Spleen (tissue), 13 donors: ENCODE measurements at regions of chr3 and their contacts with region 1.

Region 1: GRCh38 chr3:128426128-128426921 is 40.4 kb downstream of the DNAJB8 start:
- DNase-seq: peak; percentile 92
- H3K4me3 ChIP-seq: peak overlapping the region in 6 of 8 donors; percentile 19 to 62 (median 28)
- H3K27ac ChIP-seq: no peak overlapping the region
- H3K4me1 ChIP-seq: peaks cover 0 to 13% (median 10%) of the 10 kb centered on the region in 6 donors
- H3K27me3 ChIP-seq: peaks cover 0 to 59% (median 0%) of the 10 kb centered on the region in 7 donors
- CTCF ChIP-seq: peak; percentile 49 to 97 (median 84)
- POLR2A ChIP-seq: no peak

Region 2: DNA sequence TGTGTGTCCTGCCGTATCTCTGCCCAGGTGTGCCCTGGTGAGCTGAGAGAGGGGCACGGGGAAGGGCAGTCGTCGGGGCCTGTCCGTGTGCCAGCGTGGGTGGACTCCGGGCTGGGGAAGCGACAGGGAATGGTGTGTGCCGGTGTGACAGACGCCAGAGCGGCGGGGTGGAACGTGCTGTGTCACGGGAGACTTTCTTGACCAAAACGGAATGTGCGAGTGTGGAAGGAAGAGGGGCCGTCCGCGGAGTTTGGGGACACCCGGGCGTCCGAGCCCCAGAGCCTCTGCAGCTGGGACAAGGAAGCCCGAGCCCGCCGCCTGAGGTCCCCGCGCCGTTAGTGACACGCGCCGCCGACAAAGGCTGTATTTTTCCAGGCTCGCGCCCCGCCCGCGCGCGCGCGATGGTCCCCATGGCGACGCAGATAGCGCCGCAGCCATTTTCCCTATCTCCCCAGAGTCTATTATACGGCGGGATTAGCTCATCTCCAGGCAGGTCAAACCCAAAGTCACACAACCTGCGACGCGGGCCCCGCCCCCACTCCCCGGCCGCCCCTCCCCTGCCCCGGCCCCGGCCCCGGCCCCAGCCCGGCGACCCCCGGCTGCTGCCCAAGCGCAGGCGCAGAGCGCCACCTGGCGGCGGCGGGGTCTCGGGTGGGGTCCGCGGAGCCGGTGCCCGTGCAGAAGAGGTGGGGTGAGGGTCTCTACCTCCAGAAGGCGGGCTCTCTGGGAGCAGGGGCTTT is 71.2 kb after region 1 on chr3:
- intact Hi-C with region 1: loop called (anchors 5 kb)
- DNase-seq: peak; percentile 86
- H3K4me3 ChIP-seq: peak overlapping the region; percentile 35 to 69 (median 58)
- H3K27ac ChIP-seq: peak overlapping the region in 4 of 8 donors; percentile 15 to 54 (median 50)
- H3K4me1 ChIP-seq: peaks cover 6 to 52% (median 33%) of the 10 kb centered on the region in 6 donors
- H3K27me3 ChIP-seq: peaks cover 0 to 77% (median 37%) of the 10 kb centered on the region in 7 donors
- CTCF ChIP-seq: peak in 9 of 11 experiments; percentile 44 to 88 (median 71)
- POLR2A ChIP-seq: no peak

Region 3: GRCh38 chr3:128584412-128585020 is 158.2 kb after region 1 on chr3:
- intact Hi-C with region 1: loop called (anchors 10 kb)
- DNase-seq: peak; percentile 89
- H3K4me3 ChIP-seq: no peak overlapping the region
- H3K27ac ChIP-seq: no peak overlapping the region
- H3K4me1 ChIP-seq: peaks cover 4 to 18% (median 7%) of the 10 kb centered on the region in 6 donors
- H3K27me3 ChIP-seq: peaks cover 0 to 4% (median 0%) of the 10 kb centered on the region in 7 donors
- CTCF ChIP-seq: peak; percentile 44 to 93 (median 76)
- POLR2A ChIP-seq: no peak

Region 4: GRCh38 chr3:128607710-128608048 is 181.4 kb after region 1 on chr3:
- intact Hi-C with region 1: loop called (anchors 5 kb)
- DNase-seq: no peak
- H3K4me3 ChIP-seq: peak overlapping the region; percentile 18 to 74 (median 49)
- H3K27ac ChIP-seq: peak overlapping the region; percentile 53 to 84 (median 79)
- H3K4me1 ChIP-seq: peaks cover 0 to 48% (median 19%) of the 10 kb centered on the region in 6 donors
- H3K27me3 ChIP-seq: peaks cover 0 to 9% (median 0%) of the 10 kb centered on the region in 7 donors
- CTCF ChIP-seq: no peak
- POLR2A ChIP-seq: no peak